Activated B cell treated with CpG ODN at 0.5 μM for 24 hours (primary cell): ENCODE measurements at regions of chr15 and their contacts with region 1.

Region 1: GRCh38 chr15:69475769-69476358 is 23.2 kb downstream of the RPLP1 start:
- DNase-seq: peak; percentile 65
- ATAC-seq: peak; percentile 88
- H3K4me3 Mint-ChIP-seq: no peak overlapping the region
- H3K27ac Mint-ChIP-seq: no peak overlapping the region
- H3K4me1 Mint-ChIP-seq: peaks cover 3% of the 10 kb centered on the region
- H3K27me3 Mint-ChIP-seq: peaks cover 6% of the 10 kb centered on the region
- CTCF ChIP-seq: no peak

Region 2: DNA sequence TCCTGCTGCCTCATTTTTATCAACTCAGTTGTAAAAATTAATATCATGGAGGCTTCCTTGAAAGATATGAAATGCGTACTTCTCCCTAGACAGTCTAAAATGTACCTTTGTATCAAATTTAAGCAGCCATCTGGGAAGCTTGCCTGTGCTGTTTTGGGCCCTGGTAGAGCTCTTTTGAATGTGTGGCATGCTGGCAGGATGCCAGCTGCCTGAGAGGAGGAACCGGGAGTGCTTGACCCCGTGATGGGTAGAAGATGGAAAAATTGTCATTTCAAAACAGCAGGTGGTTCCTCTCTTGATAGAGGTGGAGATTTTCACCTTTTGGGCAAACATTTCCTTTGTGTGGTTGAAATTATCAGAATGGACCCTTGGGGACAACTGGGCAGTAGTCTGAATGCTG is 222.1 kb after region 1 on chr15:
- CTCF ChIA-PET with region 1: no interaction called
- POLR2A ChIA-PET with region 1: no interaction called
- intact Hi-C with region 1: no loop called
- DNase-seq: no peak
- ATAC-seq: no peak
- H3K4me3 Mint-ChIP-seq: no peak overlapping the region
- H3K27ac Mint-ChIP-seq: no peak overlapping the region
- H3K4me1 Mint-ChIP-seq: peaks cover 11% of the 10 kb centered on the region
- H3K27me3 Mint-ChIP-seq: peaks cover 4% of the 10 kb centered on the region
- CTCF ChIP-seq: no peak

Region 3: GRCh38 chr15:70512772-70513362 is 1037.0 kb after region 1 on chr15:
- CTCF ChIA-PET with region 1: interaction called, 4 read pairs
- POLR2A ChIA-PET with region 1: no interaction called
- intact Hi-C with region 1: loop called (anchors 2 kb)
- DNase-seq: no peak
- ATAC-seq: peak; percentile 80
- H3K4me3 Mint-ChIP-seq: no peak overlapping the region
- H3K27ac Mint-ChIP-seq: no peak overlapping the region
- H3K4me1 Mint-ChIP-seq: peaks cover 32% of the 10 kb centered on the region
- H3K27me3 Mint-ChIP-seq: peaks cover 5% of the 10 kb centered on the region
- CTCF ChIP-seq: no peak

Region 4: DNA sequence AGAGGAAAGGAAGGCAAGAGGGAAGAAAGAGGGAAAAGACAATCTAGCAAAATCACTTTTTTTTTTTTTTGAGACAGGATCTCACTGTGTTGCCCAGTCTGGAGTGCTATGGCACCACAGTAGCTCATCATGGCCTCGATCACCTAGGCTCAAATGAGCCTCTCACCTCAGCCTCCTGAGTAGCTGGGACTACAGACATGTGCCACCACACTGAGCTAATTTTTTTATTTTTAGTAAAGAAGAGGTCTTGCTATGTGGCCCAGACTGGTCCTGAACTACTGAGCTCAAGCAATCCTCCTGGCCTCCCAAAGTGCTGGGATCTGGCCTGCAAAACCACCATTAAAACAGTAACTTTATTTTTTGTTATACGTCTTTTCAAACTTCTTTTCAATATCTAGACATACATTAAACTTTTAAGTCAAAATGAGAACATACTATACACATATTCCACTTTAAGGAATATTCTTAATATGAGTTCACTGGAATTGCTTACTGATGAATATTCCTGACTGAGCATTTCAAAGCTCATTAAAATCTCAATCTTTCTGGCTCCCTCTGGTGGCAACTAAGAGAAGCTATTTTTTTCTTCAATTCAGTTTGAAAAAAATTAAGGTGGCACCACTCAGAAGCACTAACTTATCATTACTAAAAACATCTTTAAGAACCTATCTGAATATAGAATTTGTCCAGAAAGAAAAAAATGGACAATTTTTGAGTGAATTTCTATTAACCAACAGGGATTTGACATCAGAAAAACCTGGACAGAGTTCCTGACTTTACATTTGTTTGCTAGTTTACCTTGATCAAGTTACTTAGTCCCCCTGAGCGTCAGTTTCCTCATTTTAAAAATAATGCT is 1246.6 kb after region 1 on chr15:
- CTCF ChIA-PET with region 1: interaction called, 118 read pairs
- POLR2A ChIA-PET with region 1: no interaction called
- intact Hi-C with region 1: loop called (anchors 1 kb)
- DNase-seq: no peak
- ATAC-seq: no peak
- H3K4me3 Mint-ChIP-seq: no peak overlapping the region
- H3K27ac Mint-ChIP-seq: no peak overlapping the region
- H3K4me1 Mint-ChIP-seq: no peaks in the 10 kb centered on the region
- H3K27me3 Mint-ChIP-seq: peaks cover 9% of the 10 kb centered on the region
- CTCF ChIP-seq: peak; percentile 53

Region 5: GRCh38 chr15:70810916-70811578 is 1335.2 kb after region 1 on chr15:
- CTCF ChIA-PET with region 1: interaction called, 31 read pairs
- POLR2A ChIA-PET with region 1: no interaction called
- intact Hi-C with region 1: loop called (anchors 1 kb)
- DNase-seq: no peak
- ATAC-seq: no peak
- H3K4me3 Mint-ChIP-seq: no peak overlapping the region
- H3K27ac Mint-ChIP-seq: no peak overlapping the region
- H3K4me1 Mint-ChIP-seq: peaks cover 12% of the 10 kb centered on the region
- H3K27me3 Mint-ChIP-seq: peaks cover 6% of the 10 kb centered on the region
- CTCF ChIP-seq: no peak

Region 6: GRCh38 chr15:71443538-71443937 is 1967.7 kb after region 1 on chr15:
- CTCF ChIA-PET with region 1: no interaction called
- POLR2A ChIA-PET with region 1: no interaction called
- intact Hi-C with region 1: loop called (anchors 5 kb)
- DNase-seq: no peak
- ATAC-seq: no peak
- H3K4me3 Mint-ChIP-seq: no peak overlapping the region
- H3K27ac Mint-ChIP-seq: no peak overlapping the region
- H3K4me1 Mint-ChIP-seq: peaks cover 3% of the 10 kb centered on the region
- H3K27me3 Mint-ChIP-seq: peaks cover 2% of the 10 kb centered on the region
- CTCF ChIP-seq: peak; percentile 65